ENCODE measurements at regions of chr15 and their contacts with region 1.

Region 1: DNA sequence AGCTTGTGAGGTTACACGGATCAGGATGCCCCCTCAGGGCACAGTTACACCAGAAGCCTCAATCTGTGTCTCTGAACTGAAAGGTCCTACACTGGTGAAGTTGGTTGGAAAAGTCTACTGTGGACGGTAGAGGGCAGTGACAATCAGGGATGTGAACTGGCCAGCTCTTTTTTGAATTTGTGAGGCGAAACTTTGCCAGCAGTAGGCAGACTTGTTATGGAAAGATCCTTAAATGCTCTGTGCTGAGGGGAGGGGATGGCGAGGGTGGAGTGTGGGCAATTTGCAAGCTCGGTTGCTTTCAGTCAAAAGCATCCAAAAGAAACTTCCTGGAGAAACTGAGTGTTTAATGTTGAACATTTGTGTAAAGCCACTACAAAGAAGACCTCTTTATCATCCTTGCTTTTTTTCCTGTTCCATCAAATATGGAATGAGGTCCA is 127.4 kb upstream of the ABHD17C start:
- DNase-seq: peak; percentile 52
- H3K4me3 ChIP-seq: no peak overlapping the region
- CTCF ChIP-seq: peak; percentile 81

Region 2: GRCh38 chr15:80455668-80456442 is 111.9 kb before region 1 on chr15:
- CTCF ChIA-PET with region 1: interaction called, 159 read pairs
- POLR2A ChIA-PET with region 1: no interaction called
- DNase-seq: peak; percentile 87
- H3K4me3 ChIP-seq: no peak overlapping the region
- CTCF ChIP-seq: peak; percentile 83

Region 3: GRCh38 chr15:80489030-80489594 is 78.6 kb before region 1 on chr15:
- CTCF ChIA-PET with region 1: interaction called, 10 read pairs
- POLR2A ChIA-PET with region 1: no interaction called
- DNase-seq: peak; percentile 84
- H3K4me3 ChIP-seq: no peak overlapping the region
- CTCF ChIP-seq: no peak

Region 4: DNA sequence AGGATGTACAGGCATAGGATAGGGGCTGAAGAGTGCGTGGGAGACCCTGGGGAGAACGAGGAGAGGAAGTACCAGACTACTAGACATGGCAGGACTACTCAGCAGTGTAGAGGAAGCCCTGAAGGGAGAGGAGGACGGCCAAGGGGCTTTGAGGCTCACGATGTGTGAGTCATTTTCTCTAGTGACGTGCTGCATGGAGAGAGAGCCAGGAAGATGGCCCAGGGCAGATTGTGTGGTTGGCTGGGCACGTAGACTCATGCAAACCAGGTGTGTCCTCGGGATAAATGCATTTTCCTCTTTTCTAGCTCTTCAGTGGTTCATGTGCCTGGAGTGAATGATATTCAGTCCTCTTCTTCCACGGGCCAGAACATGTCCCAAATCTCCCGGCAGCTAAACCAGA is 12.4 kb after region 1 on chr15:
- CTCF ChIA-PET with region 1: interaction called, 146 read pairs
- POLR2A ChIA-PET with region 1: no interaction called
- DNase-seq: peak; percentile 57
- H3K4me3 ChIP-seq: no peak overlapping the region
- CTCF ChIP-seq: no peak

Region 5: DNA sequence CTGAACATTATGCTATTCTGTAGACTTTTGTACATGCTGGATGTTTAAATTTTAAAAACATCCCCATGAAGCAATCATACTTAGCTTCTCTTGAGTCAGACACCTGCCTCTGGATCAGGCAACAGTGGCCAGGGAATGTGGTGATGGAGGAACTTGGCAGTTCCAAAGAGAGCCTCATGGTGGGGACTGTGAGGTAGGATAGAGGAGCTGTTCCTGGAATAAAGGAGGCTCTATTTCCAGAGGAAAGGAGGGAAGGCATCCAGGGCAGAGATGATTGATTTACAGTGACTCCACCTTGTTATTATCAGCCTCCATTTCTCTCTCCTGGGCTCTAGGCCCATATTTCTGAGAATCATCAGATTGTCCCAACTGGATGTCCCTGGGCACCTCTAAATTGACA is 92.4 kb after region 1 on chr15:
- CTCF ChIA-PET with region 1: interaction called, 17 read pairs
- POLR2A ChIA-PET with region 1: no interaction called
- DNase-seq: no peak
- H3K4me3 ChIP-seq: no peak overlapping the region
- CTCF ChIP-seq: peak; percentile 65

Region 6: GRCh38 chr15:80789296-80789695 is 221.6 kb after region 1 on chr15:
- CTCF ChIA-PET with region 1: interaction called, 23 read pairs
- POLR2A ChIA-PET with region 1: no interaction called
- DNase-seq: no peak
- H3K4me3 ChIP-seq: no peak overlapping the region; the same call in 1 of the 2 replicates
- CTCF ChIP-seq: no peak

Region 7: GRCh38 chr15:81312790-81313543 is 745.2 kb after region 1 on chr15:
- CTCF ChIA-PET with region 1: no interaction called
- POLR2A ChIA-PET with region 1: no interaction called
- DNase-seq: peak; percentile 90
- H3K4me3 ChIP-seq: no peak overlapping the region
- CTCF ChIP-seq: no peak

Measured in AG04449 (cell line).